Heart left ventricle (tissue), 16 donors: ENCODE measurements at regions of chr18 and their contacts with region 1.

Region 1: GRCh38 chr18:62714671-62715435 is 488 bp upstream of the PHLPP1 start:
- DNase-seq: peak; percentile 100
- ATAC-seq: peak; percentile 96 to 99 (median 99)
- H3K4me3 ChIP-seq: peak overlapping the region; percentile 56 to 88 (median 76)
- H3K27ac ChIP-seq: peak overlapping the region; percentile 66 to 98 (median 91)
- H3K4me1 ChIP-seq: peaks cover 0 to 35% (median 17%) of the 10 kb centered on the region in 12 donors
- H3K27me3 ChIP-seq: no peaks in the 10 kb centered on the region
- CTCF ChIP-seq: peak; percentile 65 to 95 (median 84)
- POLR2A ChIP-seq: no peak

Region 2: GRCh38 chr18:62186774-62187542 is 527.9 kb before region 1 on chr18 and contains the starts of genes PIGN and RELCH:
- intact Hi-C with region 1: loop called in 2 of 10 experiments (anchors 10 kb)
- DNase-seq: peak; percentile 93 to 97 (median 96)
- ATAC-seq: peak; percentile 99 to 100 (median 99)
- H3K4me3 ChIP-seq: peak within 1 kb of the TSS; percentile 66 to 100 (median 90)
- H3K27ac ChIP-seq: peak within 1 kb of the TSS; percentile 37 to 87 (median 81)
- H3K4me1 ChIP-seq: peaks cover 0 to 51% (median 35%) of the 10 kb centered on the region in 12 donors
- H3K27me3 ChIP-seq: no peaks in the 10 kb centered on the region
- CTCF ChIP-seq: no peak
- POLR2A ChIP-seq: peak in 1 of 2 donors; percentile 74
- total RNA-seq, gene PIGN: 16.6 to 29.6 (median 23.3) TPM
- total RNA-seq, gene RELCH: 11.6 to 24.8 (median 15.2) TPM

Region 3: GRCh38 chr18:62505669-62506494 is 209.0 kb before region 1 on chr18:
- intact Hi-C with region 1: no loop called
- DNase-seq: no peak
- ATAC-seq: peak in 2 of 4 donors; percentile 43 to 47
- H3K4me3 ChIP-seq: peak overlapping the region in 11 of 12 donors; percentile 1 to 54 (median 47)
- H3K27ac ChIP-seq: peak overlapping the region; percentile 24 to 93 (median 70)
- H3K4me1 ChIP-seq: peaks cover 0 to 30% (median 0%) of the 10 kb centered on the region in 12 donors
- H3K27me3 ChIP-seq: no peaks in the 10 kb centered on the region
- CTCF ChIP-seq: no peak
- POLR2A ChIP-seq: no peak

Region 4: DNA sequence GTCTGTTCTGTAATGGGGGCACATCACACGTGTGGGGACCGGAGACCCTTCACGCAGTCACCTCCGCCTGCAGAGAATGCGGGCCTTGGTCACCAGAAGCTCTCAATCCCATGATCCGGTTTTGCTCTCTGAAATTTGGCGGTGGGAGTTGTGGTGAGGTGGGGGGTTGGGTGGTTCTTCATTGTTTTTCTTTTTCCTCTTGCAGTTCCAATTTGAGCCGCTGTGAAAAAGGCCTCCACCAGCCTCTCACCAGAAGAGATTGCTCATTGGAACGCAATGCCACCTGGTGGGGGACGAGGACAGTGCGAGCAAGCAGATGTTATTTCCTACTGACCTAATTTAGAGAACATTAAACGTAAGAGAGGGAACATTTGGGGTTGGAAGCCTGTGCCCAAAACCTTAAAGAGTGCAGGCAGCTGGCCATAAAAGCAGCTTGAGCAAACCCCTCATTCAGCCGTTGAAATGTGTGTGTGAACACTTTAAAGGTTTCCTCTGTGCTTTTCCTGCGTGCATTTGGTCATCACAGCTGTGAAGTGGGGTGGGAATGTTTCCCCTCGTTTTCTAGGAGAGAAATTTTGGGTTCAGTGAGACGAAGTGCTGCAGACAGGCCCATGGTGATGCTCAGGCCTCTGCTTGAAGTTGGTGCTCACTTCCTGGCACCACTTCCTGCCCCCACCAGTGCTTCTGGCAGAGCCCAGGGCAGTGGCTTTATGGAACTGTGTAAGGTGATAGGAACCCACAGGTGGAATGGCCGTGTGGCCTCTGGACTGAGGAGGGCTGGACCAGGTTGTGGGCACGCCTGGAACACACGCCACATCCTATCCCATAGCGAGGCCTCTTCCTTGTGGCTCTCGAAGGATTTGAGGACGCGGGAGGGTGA is 130.4 kb before region 1 on chr18:
- intact Hi-C with region 1: loop called in 8 of 10 experiments (anchors 2 to 10 kb)
- DNase-seq: peak; percentile 82 to 87 (median 85)
- ATAC-seq: peak; percentile 79 to 88 (median 85)
- H3K4me3 ChIP-seq: peak overlapping the region in 5 of 12 donors; percentile 10 to 37 (median 19)
- H3K27ac ChIP-seq: peak overlapping the region in 6 of 12 donors; percentile 27 to 69 (median 41)
- H3K4me1 ChIP-seq: peaks cover 0 to 25% (median 12%) of the 10 kb centered on the region in 12 donors
- H3K27me3 ChIP-seq: no peaks in the 10 kb centered on the region
- CTCF ChIP-seq: peak; percentile 79 to 98 (median 93)
- POLR2A ChIP-seq: no peak

Region 5: DNA sequence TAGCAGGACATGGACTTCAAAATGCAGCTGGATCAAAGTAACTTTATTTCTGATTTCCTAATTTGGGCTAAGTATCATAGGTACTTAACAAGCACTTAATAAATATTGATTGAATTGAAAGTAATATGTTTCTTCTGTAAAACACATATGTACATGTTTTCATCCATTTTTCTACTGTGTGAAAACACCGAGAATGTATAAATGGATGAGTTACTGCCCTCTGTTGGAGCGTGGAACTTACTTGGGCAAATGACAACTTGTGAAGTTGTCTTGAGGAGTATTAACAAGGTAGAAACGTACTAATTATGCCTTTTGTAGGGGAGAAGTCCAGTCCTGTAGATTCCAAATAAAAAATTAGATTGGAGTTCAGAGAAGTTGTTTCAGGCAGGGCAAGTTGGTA is 87.7 kb after region 1 on chr18:
- intact Hi-C with region 1: loop called in 6 of 10 experiments (anchors 5 to 10 kb)
- DNase-seq: no peak
- ATAC-seq: no peak
- H3K4me3 ChIP-seq: no peak overlapping the region
- H3K27ac ChIP-seq: no peak overlapping the region
- H3K4me1 ChIP-seq: peaks cover 0 to 13% (median 0%) of the 10 kb centered on the region in 12 donors
- H3K27me3 ChIP-seq: no peaks in the 10 kb centered on the region
- CTCF ChIP-seq: peak in 8 of 12 donors; percentile 12 to 40 (median 18)
- POLR2A ChIP-seq: no peak

Region 6: GRCh38 chr18:62957885-62958472 is 243.1 kb after region 1 on chr18:
- intact Hi-C with region 1: loop called in 8 of 10 experiments (anchors 2 to 10 kb)
- DNase-seq: peak in 3 of 5 donors; percentile 28 to 40 (median 34)
- ATAC-seq: peak in 3 of 4 donors; percentile 45 to 65 (median 58)
- H3K4me3 ChIP-seq: no peak overlapping the region
- H3K27ac ChIP-seq: no peak overlapping the region
- H3K4me1 ChIP-seq: peaks cover 0 to 15% (median 6%) of the 10 kb centered on the region in 12 donors
- H3K27me3 ChIP-seq: no peaks in the 10 kb centered on the region
- CTCF ChIP-seq: peak; percentile 24 to 62 (median 49)
- POLR2A ChIP-seq: no peak

Region 7: DNA sequence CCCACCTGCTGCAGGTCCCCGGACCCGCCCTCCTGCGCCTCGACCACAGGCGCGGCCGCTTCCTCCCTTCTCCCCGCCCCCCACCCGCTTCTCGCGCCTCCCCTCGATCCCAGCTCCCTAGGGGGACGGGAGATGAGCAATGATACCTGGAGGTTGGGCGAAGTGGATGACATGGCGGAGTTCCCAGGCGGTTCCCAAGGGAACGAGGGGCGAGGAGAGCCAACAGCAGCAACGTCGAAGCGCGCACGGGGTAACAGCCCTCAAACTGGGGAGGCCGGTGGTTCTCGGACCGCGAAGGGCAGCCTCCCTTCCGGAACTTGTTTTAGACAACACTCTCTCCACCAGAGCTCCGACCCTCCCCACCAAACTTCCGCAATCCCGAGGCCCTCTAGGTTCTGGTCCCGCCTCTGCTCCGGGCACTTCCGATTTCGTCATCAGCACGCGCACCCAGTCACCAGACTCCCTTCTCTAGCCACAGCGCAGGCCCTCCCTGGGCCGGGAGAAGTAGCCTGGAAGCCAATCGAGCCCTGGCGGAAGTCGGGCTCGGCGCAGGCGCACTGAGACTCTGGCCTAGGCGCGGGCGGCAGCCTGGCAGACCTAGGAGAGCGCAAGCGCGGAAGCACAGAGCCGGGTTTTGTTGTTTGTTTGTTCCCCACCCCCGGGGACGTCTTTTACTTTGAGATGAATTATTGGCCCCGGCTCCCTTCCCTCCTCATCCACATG is 707.4 kb after region 1 on chr18 and contains the start of gene VPS4B:
- intact Hi-C with region 1: loop called in 2 of 10 experiments (anchors 10 kb)
- DNase-seq: peak; percentile 99 to 100 (median 100)
- ATAC-seq: peak; percentile 99 to 100 (median 99)
- H3K4me3 ChIP-seq: peak within 1 kb of the TSS; percentile 54 to 99 (median 84)
- H3K27ac ChIP-seq: peak within 1 kb of the TSS; percentile 86 to 98 (median 96)
- H3K4me1 ChIP-seq: peaks cover 0 to 41% (median 19%) of the 10 kb centered on the region in 12 donors
- H3K27me3 ChIP-seq: no peaks in the 10 kb centered on the region
- CTCF ChIP-seq: no peak
- POLR2A ChIP-seq: peak; percentile 37 to 88
- total RNA-seq, gene VPS4B: 13.5 to 40.0 (median 19.9) TPM